CD4-positive, alpha-beta T cell (primary cell): ENCODE measurements at regions of chr12 and their contacts with region 1.

Region 1: DNA sequence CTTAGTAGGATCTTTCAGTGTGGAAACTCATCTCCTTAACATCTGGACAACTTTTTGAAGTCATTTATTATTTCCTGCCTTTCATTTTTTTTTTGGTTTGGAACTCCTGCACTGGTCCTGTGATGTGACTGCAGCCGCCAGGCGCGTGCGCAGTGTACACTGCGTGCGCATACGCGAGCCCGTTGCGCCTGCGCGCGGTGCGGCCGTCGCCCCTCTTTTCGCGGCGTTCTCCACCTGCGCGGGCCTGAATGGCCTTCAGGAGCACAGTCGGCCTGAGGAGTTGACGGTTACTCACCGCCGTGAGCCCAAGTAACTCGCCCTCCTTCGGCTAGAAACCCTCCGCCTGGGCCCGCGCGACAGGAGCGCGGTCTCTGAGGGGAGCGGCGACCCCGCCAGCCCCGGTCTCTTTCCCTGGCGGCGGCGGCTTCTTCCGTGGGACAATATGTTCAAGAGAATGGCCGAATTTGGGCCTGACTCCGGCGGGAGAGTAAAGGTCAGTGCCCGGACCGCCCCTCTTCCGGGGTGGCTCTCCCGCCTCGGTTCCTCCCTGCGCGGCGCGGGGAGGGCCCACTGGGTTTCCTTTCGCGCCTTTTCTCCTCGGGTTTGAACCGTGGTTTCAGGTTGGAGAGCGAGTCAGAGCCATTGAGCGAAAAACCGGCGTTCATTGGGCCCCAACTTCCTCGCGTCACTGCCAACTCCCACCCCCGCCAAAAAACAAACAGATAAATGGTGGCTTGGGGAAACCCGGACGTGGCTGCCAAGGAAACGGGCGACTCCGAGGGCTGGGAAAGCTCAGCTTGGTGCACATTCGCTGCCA is at the start of gene YEATS4:
- DNase-seq: peak; percentile 70 to 95 (median 81)
- ATAC-seq: peak; percentile 81
- H3K4me3 ChIP-seq: peak within 1 kb of the TSS; percentile 100
- H3K4me3 Mint-ChIP-seq: peak within 1 kb of the TSS; percentile 97
- H3K27ac ChIP-seq: peak within 1 kb of the TSS; percentile 96 to 99
- H3K27ac Mint-ChIP-seq: peak within 1 kb of the TSS; percentile 95
- H3K4me1 ChIP-seq: peaks cover 21% of the 10 kb centered on the region
- H3K4me1 Mint-ChIP-seq: peaks cover 27% of the 10 kb centered on the region
- H3K27me3 ChIP-seq: no peaks in the 10 kb centered on the region
- H3K27me3 Mint-ChIP-seq: peaks cover under 1% of the 10 kb centered on the region
- CTCF ChIP-seq: no peak
- total RNA-seq, gene YEATS4: 26.2 TPM

Region 2: DNA sequence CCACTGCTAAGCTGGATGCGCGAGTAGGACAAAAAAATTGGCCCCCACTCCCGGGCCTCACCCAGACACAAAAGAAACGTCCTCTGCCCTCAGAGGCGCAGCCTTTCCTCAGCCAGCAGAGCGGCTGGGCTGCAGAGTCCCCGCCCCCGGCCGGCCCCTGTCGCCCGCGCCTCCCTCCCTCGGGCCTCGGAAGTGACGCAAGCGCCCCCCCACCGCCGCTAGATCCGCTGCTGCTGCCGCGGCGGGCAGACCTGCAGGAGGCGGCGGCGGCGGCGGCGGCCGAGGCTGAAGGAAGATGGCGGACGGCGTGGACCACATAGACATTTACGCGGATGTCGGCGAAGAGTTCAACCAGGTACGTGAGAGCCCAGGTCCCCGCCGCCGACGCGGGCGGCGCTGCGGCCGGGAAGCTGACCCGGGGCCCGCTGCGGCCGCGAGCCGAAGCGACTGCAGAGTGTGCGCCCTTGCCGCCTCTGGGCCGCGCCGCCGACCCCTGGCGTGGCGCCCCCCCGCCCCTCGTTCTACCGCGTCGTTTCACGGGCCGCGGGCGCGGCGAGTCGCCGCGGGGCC is 120.3 kb before region 1 on chr12 and contains the start of gene CPSF6:
- CTCF ChIA-PET with region 1: no interaction called
- POLR2A ChIA-PET with region 1: no interaction called
- intact Hi-C with region 1: loop called in 1 of 2 experiments (anchors 5 kb)
- DNase-seq: peak; percentile 93 to 99 (median 96)
- ATAC-seq: peak; percentile 85
- H3K4me3 ChIP-seq: peak within 1 kb of the TSS; percentile 87
- H3K4me3 Mint-ChIP-seq: peak within 1 kb of the TSS; percentile 97
- H3K27ac ChIP-seq: peak within 1 kb of the TSS; percentile 85 to 86
- H3K27ac Mint-ChIP-seq: peak within 1 kb of the TSS; percentile 99
- H3K4me1 ChIP-seq: peaks cover 30% of the 10 kb centered on the region
- H3K4me1 Mint-ChIP-seq: peaks cover 59% of the 10 kb centered on the region
- H3K27me3 ChIP-seq: no peaks in the 10 kb centered on the region
- H3K27me3 Mint-ChIP-seq: no peaks in the 10 kb centered on the region
- CTCF ChIP-seq: no peak
- total RNA-seq, gene CPSF6: 80.9 to 86.7 TPM

Region 3: DNA sequence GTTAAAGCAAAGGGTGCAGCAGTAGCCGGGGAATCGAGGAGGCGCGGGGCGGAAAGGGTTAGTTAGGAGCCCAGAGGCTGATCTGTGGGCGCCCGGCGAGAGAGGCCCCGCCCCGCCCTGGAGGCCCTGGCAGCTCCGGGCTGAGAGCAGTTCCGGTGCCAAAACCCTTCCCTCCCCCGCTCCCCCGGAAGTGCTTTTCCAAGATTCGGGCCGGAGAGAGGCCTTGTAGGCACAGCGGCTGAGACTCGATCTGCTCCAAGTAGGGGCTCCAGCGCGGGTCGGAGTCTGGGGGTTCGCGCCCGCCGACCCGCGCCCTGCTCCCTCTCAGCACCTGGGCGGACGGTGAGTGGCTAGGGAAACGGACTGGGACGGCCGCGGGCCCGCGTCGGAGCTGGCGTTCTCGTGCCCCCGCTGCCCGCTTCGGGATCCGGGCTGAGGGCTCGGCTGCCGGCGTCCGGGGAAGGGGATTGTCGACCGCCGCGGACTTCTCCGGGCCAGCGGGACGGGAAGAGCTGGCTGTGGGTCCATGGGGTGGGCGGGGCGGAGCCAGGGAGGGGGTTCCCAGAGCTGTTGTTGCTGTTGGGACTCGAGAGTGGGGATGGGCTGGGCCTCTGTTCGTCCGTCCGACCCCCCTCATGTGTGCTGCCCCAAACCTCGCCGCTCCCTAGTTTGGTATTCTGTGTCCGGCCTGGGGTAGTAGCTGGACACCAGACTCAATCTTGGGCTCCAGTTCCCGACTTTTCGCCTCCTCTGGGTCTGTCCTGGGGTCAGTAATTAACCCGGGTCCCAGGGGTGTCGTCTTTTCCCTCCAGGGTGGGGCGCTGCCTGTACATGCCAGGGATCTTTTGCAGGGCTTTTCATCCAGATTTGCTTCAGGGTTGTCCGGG is 110.7 kb after region 1 on chr12 and contains the start of gene FRS2:
- CTCF ChIA-PET with region 1: no interaction called
- POLR2A ChIA-PET with region 1: interaction called, 3 read pairs
- intact Hi-C with region 1: loop called in 1 of 2 experiments (anchors 2 kb)
- DNase-seq: peak; percentile 68 to 90 (median 82)
- ATAC-seq: peak; percentile 98
- H3K4me3 ChIP-seq: peak within 1 kb of the TSS; percentile 77
- H3K4me3 Mint-ChIP-seq: peak within 1 kb of the TSS; percentile 100
- H3K27ac ChIP-seq: peak within 1 kb of the TSS; percentile 63 to 72
- H3K27ac Mint-ChIP-seq: peak within 1 kb of the TSS; percentile 92
- H3K4me1 ChIP-seq: peaks cover 12% of the 10 kb centered on the region
- H3K4me1 Mint-ChIP-seq: peaks cover 55% of the 10 kb centered on the region
- H3K27me3 ChIP-seq: no peaks in the 10 kb centered on the region
- H3K27me3 Mint-ChIP-seq: no peaks in the 10 kb centered on the region
- CTCF ChIP-seq: no peak
- total RNA-seq, gene FRS2: 21.7 to 24.9 TPM

Region 4: GRCh38 chr12:69585189-69586062 is 225.7 kb after region 1 on chr12 and contains the start of gene CCT2:
- CTCF ChIA-PET with region 1: interaction called, 6 read pairs
- POLR2A ChIA-PET with region 1: no interaction called
- intact Hi-C with region 1: loop called in 1 of 2 experiments (anchors 5 kb)
- DNase-seq: peak; percentile 92 to 99 (median 96)
- ATAC-seq: peak; percentile 87
- H3K4me3 ChIP-seq: peak within 1 kb of the TSS; percentile 98
- H3K4me3 Mint-ChIP-seq: peak within 1 kb of the TSS; percentile 99
- H3K27ac ChIP-seq: peak within 1 kb of the TSS; percentile 96 to 97
- H3K27ac Mint-ChIP-seq: peak within 1 kb of the TSS; percentile 98
- H3K4me1 ChIP-seq: peaks cover 12% of the 10 kb centered on the region
- H3K4me1 Mint-ChIP-seq: peaks cover 27% of the 10 kb centered on the region
- H3K27me3 ChIP-seq: no peaks in the 10 kb centered on the region
- H3K27me3 Mint-ChIP-seq: no peaks in the 10 kb centered on the region
- CTCF ChIP-seq: peak; percentile 28
- total RNA-seq, gene CCT2: 173 to 177 TPM

Region 5: GRCh38 chr12:69738351-69739286 is 378.9 kb after region 1 on chr12 and contains the start of gene RAB3IP:
- CTCF ChIA-PET with region 1: no interaction called
- POLR2A ChIA-PET with region 1: no interaction called
- intact Hi-C with region 1: loop called in 1 of 2 experiments (anchors 5 kb)
- DNase-seq: peak; percentile 84 to 98 (median 92)
- ATAC-seq: peak; percentile 84
- H3K4me3 ChIP-seq: peak within 1 kb of the TSS; percentile 82
- H3K4me3 Mint-ChIP-seq: peak within 1 kb of the TSS; percentile 86
- H3K27ac ChIP-seq: peak within 1 kb of the TSS; percentile 48 to 68
- H3K27ac Mint-ChIP-seq: peak within 1 kb of the TSS; percentile 80
- H3K4me1 ChIP-seq: peaks cover 11% of the 10 kb centered on the region
- H3K4me1 Mint-ChIP-seq: peaks cover 27% of the 10 kb centered on the region
- H3K27me3 ChIP-seq: no peaks in the 10 kb centered on the region
- H3K27me3 Mint-ChIP-seq: peaks cover 6% of the 10 kb centered on the region
- CTCF ChIP-seq: peak; percentile 75
- total RNA-seq, gene RAB3IP: 15.2 to 19.6 TPM

Region 6: GRCh38 chr12:69879041-69879960 is 519.6 kb after region 1 on chr12:
- CTCF ChIA-PET with region 1: no interaction called
- POLR2A ChIA-PET with region 1: no interaction called
- intact Hi-C with region 1: no loop called
- DNase-seq: peak; percentile 36 to 78 (median 52)
- ATAC-seq: peak; percentile 92
- H3K4me3 ChIP-seq: no peak overlapping the region
- H3K4me3 Mint-ChIP-seq: no peak overlapping the region
- H3K27ac ChIP-seq: no peak overlapping the region
- H3K27ac Mint-ChIP-seq: no peak overlapping the region
- H3K4me1 ChIP-seq: no peaks in the 10 kb centered on the region
- H3K4me1 Mint-ChIP-seq: peaks cover 7% of the 10 kb centered on the region
- H3K27me3 ChIP-seq: peaks cover 0 to 2% of the 10 kb centered on the region in 2 experiments
- H3K27me3 Mint-ChIP-seq: peaks cover 45% of the 10 kb centered on the region
- CTCF ChIP-seq: peak; percentile 88